Activated CD4-positive, alpha-beta T cell treated with anti-CD3 and anti-CD28 coated beads, Interleukin-2, amount 10 ng/mL, durations not matched to agents 24 days and 14 days (primary cell): ENCODE measurements at regions of chr10 and their contacts with region 1.

Region 1: GRCh38 chr10:103712570-103713498 is 142.5 kb downstream of the SH3PXD2A start:
- DNase-seq: peak; percentile 95
- H3K4me3 Mint-ChIP-seq: no peak overlapping the region
- H3K27ac Mint-ChIP-seq: no peak overlapping the region
- H3K4me1 Mint-ChIP-seq: peaks cover 8% of the 10 kb centered on the region
- H3K27me3 Mint-ChIP-seq: no peaks in the 10 kb centered on the region

Region 2: GRCh38 chr10:103542764-103543616 is 169.8 kb before region 1 on chr10:
- intact Hi-C with region 1: no loop called
- DNase-seq: peak; percentile 78
- H3K4me3 Mint-ChIP-seq: peak overlapping the region; percentile 71
- H3K27ac Mint-ChIP-seq: peak overlapping the region; percentile 64
- H3K4me1 Mint-ChIP-seq: peaks cover 15% of the 10 kb centered on the region
- H3K27me3 Mint-ChIP-seq: peaks cover 18% of the 10 kb centered on the region

Region 3: DNA sequence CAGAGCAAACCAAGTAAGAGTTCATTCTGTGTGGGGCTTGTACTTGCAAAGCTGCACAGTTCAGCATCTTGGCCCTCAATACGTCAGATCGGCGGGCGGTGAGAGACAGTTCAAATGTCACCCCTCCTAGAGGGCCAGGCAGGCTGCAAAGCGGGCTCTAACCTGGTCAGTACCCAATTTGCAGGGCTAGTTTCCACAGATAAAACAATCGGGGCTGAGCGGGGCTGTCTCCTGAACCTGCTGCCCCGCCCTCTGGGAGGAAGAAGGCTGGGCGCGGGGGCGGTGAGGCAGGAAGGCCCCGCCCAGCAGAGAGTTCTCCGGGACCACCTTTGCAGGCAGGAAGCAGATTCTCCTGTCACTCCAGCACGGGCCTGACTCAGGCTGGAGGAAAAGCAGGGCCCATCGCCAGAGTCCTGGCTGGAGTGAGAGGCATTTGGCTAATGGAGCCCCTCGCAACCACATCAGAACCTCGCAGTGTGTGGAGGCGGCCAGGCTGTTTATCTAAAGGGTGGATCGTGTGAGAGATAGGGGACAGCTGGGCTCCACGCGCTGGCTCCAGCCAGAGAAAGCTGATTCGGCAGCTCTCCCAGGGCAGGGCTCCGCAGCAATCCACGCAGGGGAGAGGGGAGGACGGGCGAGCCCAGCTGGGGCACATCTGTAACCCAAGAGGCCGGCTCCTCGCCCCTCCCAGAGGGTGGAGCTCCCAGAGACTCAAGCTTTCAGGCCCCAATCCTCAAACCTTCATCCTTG is 59.4 kb after region 1 on chr10:
- intact Hi-C with region 1: loop called (anchors 5 kb)
- DNase-seq: peak; percentile 89
- H3K4me3 Mint-ChIP-seq: peak overlapping the region; percentile 93
- H3K27ac Mint-ChIP-seq: peak overlapping the region; percentile 86
- H3K4me1 Mint-ChIP-seq: peaks cover 21% of the 10 kb centered on the region
- H3K27me3 Mint-ChIP-seq: peaks cover 11% of the 10 kb centered on the region

Region 4: DNA sequence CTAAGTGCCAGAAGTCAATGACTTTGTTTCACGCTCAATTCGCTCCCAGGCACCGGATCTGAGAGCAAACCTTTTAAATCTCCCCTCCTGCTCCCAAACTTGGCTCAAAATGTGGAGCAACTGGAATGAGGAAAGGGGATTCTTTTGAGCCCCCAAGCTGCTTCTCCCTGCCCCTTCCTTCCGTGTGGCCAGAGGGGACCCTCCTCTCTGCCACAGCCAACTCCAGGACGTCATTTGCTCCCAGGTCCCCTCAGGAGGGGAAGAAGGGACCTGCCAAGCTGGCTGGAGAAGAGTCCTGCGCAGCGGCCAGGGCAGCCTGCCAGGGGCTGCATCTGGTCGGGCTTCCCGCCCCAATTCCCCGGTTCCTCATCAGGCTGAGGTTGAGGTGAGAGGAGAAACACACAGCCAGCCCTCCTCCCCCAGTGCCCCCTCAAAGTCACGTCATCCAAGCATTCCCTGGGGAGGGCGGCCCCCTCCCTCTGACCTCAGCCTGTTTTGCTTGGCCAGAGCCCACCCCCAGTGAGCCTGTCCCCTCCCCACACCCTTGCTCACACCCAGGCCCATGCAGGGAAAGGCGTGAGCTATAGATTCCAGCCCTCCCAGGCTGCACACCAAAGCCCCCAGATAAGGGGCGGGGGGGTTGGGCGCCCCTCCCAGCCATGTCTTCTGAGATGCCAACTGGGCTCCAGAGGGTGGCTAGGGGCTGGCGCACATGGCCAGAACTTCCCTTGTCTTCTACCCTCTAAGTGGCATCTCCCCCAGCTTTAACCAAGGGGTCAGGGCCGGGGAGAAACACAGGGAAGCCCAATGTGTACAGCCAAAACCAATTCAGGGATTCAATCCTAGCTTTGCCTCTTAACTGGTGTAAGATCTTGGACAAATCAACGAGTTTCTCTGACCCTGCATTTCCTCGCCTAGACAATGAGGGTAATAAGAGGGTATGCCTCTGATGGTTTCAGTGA is 107.5 kb after region 1 on chr10:
- intact Hi-C with region 1: no loop called
- DNase-seq: no peak
- H3K4me3 Mint-ChIP-seq: no peak overlapping the region
- H3K27ac Mint-ChIP-seq: no peak overlapping the region
- H3K4me1 Mint-ChIP-seq: peaks cover 6% of the 10 kb centered on the region
- H3K27me3 Mint-ChIP-seq: peaks cover 32% of the 10 kb centered on the region

Region 5: DNA sequence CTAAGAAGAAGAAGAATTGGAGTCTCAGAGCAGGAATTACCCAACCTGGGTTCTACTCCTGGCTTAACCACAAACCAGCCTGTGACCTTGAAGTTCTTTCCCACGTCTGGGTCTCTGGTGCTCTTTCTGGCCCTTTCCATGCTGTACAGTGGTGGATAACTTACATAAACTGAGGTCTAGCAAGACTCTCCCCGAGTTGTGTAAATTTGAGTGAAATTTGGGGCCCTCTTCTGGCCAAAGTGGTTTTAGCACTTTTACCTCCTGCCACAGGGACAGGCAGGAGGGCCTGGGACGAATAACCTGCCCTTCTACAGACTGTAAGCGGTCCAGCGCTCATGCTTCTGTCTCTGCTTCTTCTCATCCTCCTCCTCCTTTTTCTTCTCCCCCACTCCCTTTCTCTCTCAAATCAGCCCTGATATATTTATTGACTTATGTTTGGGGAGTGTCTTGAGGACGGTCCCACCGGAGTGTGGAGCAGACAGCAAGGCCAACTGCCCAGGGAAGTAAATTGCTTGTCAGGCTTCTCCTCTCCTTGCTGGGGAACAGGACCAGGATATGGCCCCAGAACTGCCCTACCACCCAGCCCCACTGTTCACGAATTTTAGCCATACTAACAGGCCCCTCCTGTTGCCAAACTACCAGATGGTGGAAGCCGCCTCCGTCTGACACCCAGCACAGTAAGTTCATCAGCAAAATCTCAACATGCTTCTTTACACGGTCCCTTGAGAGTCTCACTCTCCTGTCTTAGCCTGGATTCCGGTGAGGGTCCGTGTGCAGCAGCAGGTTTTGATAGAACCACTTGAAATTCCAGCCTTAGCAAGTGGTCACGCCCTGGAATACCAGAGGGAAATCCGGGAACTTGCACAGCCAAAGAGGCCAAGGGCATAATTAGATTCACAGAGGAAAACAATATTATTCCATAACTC is 146.6 kb after region 1 on chr10:
- intact Hi-C with region 1: loop called (anchors 1 kb)
- DNase-seq: peak; percentile 89
- H3K4me3 Mint-ChIP-seq: no peak overlapping the region
- H3K27ac Mint-ChIP-seq: no peak overlapping the region
- H3K4me1 Mint-ChIP-seq: peaks cover 6% of the 10 kb centered on the region
- H3K27me3 Mint-ChIP-seq: peaks cover 45% of the 10 kb centered on the region

Region 6: DNA sequence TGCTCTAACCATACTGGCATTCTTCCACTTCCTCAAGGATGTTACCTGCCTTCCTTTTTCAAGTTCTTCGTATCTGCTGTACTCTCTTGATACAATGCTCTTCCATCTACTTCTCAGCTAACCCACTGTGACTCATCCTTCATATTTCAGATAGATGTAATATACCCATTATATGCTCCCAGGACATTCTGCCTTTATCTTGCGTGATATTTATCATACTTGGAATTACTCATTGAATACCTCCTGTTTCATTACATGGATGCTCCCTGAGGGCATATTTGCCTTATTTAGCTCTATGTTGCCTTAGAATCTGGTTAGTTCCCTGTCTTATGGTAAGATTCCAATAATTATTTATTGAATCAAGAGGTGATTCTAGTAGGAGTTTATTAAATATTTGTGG is 1634.7 kb after region 1 on chr10:
- intact Hi-C with region 1: no loop called
- DNase-seq: no peak
- H3K4me3 Mint-ChIP-seq: no peak overlapping the region
- H3K27ac Mint-ChIP-seq: no peak overlapping the region
- H3K4me1 Mint-ChIP-seq: no peaks in the 10 kb centered on the region
- H3K27me3 Mint-ChIP-seq: no peaks in the 10 kb centered on the region